Esophagus muscularis mucosa (tissue), 4 donors: ENCODE measurements at regions of chr9 and their contacts with region 1.

Region 1: DNA sequence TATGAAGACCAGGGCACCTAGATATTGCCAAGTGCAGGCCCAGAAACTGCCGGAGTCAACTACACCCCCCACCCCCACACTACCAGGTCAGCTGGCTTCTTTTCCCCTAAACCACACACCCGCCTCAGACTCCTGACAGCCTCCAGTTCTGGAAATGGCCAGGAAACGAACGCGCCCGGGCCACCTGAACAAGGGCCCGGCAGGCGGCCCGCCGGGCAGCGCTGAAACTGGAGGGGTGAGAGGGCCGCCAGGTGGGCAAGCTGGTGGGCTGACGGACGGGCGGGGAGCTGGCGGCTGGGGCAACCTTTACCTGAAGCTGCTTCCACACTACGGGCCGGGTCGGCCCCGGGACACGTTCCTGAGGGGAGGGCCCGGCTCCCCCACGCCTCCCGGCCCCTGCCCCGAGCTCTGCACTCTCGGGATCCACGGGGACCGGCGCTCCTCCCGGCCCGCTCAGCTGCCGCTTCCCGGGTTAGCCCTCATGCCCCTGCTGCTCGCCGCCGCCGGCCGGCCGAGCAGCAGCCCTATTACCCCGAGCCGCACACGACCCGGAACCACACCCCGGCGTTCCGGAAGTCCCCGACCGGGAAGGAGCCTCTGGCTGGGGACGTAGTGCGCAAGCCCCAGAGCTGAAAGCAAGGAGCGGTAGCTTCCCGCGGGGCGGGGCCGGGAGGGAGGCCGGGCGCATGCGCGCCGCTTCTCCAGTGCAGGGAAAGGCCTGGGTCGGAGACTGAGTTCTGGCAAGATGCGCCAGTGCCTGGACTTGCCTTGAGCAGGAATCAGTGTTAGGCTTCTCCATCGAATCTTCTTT is at the start of gene MAPKAP1:
- DNase-seq: peak; percentile 96
- H3K4me3 ChIP-seq: peak within 1 kb of the TSS; percentile 76 to 100 (median 96)
- H3K27ac ChIP-seq: peak within 1 kb of the TSS; percentile 76 to 85 (median 82)
- H3K4me1 ChIP-seq: peaks cover 17 to 32% (median 24%) of the 10 kb centered on the region in 4 donors
- H3K27me3 ChIP-seq: no peaks in the 10 kb centered on the region
- CTCF ChIP-seq: no peak
- EP300 ChIP-seq: no peak
- POLR2A ChIP-seq: no peak
- total RNA-seq, gene MAPKAP1: 84.3 to 103 (median 93.4) TPM

Region 2: GRCh38 chr9:125407974-125408900 is 298.6 kb before region 1 on chr9:
- intact Hi-C with region 1: loop called (anchors 10 kb)
- DNase-seq: peak; percentile 94
- H3K4me3 ChIP-seq: peak overlapping the region; percentile 62 to 77 (median 66)
- H3K27ac ChIP-seq: peak overlapping the region in 3 of 4 donors; percentile 37 to 63 (median 47)
- H3K4me1 ChIP-seq: peaks cover 5 to 15% (median 15%) of the 10 kb centered on the region in 4 donors
- H3K27me3 ChIP-seq: no peaks in the 10 kb centered on the region
- CTCF ChIP-seq: peak; percentile 64 to 87 (median 74)
- EP300 ChIP-seq: no peak
- POLR2A ChIP-seq: no peak

Region 3: DNA sequence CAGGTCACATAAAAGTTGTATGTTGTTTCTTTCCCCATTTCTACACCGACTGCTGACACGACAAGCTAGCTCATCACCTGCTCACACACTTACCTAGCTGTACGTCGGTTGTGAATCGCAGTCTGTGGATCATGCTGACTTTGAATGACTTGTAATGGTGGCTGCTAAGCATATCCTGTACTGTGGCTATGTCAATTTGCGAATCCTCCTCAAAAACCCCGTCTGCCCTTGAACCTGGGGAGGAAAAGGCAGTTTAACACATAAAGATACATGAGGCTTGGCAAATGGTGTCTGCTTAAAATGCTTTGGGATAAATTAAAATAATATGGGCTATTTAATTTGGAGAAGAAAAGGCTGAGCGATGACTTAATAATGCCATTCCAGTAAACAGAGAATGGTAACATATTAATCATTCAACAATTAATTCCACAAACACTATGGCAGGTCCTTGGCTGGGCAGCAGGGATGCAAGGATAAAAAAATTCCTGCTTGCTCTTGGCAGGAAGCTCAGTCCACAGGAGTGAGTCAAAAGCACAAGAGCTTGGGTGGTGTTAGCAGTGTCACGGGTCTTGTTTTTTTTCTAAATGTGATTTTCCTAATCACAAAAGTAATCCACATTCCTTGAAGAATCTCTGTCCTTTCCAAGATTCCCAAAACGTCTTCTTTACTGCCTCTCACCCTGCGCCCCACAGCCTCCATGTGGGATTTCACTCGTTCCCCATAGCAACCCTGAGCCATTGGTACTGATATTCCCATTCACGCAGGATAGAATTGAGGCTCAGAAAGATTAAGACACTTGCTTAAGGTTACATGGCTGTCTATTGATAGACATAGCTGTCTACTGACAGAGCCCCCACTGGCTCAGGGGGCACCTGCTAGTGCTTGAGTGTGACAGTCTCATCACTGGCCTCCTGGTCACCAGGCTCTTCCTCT is 222.2 kb before region 1 on chr9:
- intact Hi-C with region 1: loop called (anchors 10 kb)
- DNase-seq: peak; percentile 91
- H3K4me3 ChIP-seq: no peak overlapping the region
- H3K27ac ChIP-seq: peak overlapping the region; percentile 72 to 80 (median 78)
- H3K4me1 ChIP-seq: peaks cover 28 to 46% (median 41%) of the 10 kb centered on the region in 4 donors
- H3K27me3 ChIP-seq: no peaks in the 10 kb centered on the region
- CTCF ChIP-seq: no peak
- EP300 ChIP-seq: no peak
- POLR2A ChIP-seq: no peak

Region 4: GRCh38 chr9:125650271-125650737 is 56.6 kb before region 1 on chr9:
- intact Hi-C with region 1: no loop called
- DNase-seq: no peak
- H3K4me3 ChIP-seq: no peak overlapping the region
- H3K27ac ChIP-seq: no peak overlapping the region
- H3K4me1 ChIP-seq: peaks cover 20 to 43% (median 30%) of the 10 kb centered on the region in 4 donors
- H3K27me3 ChIP-seq: no peaks in the 10 kb centered on the region
- CTCF ChIP-seq: no peak
- EP300 ChIP-seq: no peak
- POLR2A ChIP-seq: no peak

Region 5: DNA sequence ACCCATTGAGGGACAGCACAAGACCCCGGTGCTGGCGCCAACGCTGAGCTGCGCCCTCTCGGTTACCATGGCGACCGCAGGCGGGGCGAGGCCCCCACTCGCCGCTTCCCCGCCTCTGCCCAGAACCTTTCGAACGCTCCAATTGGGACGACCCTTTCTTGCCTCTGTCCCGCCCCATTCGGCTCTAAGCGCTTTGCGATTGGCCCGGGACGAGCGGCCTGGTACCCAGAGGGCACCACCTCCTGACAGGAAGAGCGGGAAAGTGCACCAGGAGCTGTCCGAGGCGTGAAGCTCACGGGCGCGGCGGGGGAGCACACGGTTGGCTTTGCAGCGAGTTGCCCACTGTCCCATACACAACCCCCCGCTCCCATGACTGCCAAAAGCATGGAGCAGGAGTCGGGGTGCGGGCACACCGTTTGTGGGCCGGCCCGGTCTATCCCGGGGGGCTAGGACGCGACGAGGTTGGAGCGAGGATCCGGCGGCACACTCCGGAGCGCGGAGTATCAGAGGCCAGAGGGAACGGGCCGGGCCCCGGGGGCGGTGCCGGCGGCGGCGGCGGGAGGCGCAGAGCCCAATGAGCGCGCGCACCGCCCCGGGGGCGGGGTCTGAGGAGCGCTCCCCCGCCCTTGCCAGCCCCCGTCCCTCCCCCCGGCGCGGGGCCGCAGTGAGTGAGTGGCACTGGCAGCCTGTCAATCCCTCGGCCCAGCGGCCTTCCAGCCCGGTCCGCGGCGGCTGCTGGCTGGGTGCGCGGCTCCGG is 39.3 kb after region 1 on chr9:
- intact Hi-C with region 1: loop called (anchors 5 kb)
- DNase-seq: peak; percentile 97
- H3K4me3 ChIP-seq: peak overlapping the region; percentile 78 to 96 (median 92)
- H3K27ac ChIP-seq: peak overlapping the region; percentile 88 to 96 (median 92)
- H3K4me1 ChIP-seq: peaks cover 23 to 36% (median 34%) of the 10 kb centered on the region in 4 donors
- H3K27me3 ChIP-seq: no peaks in the 10 kb centered on the region
- CTCF ChIP-seq: no peak
- EP300 ChIP-seq: no peak
- POLR2A ChIP-seq: no peak